Caco-2 (cell line): ENCODE measurements at regions of chr9 and their contacts with region 1.

Region 1: DNA sequence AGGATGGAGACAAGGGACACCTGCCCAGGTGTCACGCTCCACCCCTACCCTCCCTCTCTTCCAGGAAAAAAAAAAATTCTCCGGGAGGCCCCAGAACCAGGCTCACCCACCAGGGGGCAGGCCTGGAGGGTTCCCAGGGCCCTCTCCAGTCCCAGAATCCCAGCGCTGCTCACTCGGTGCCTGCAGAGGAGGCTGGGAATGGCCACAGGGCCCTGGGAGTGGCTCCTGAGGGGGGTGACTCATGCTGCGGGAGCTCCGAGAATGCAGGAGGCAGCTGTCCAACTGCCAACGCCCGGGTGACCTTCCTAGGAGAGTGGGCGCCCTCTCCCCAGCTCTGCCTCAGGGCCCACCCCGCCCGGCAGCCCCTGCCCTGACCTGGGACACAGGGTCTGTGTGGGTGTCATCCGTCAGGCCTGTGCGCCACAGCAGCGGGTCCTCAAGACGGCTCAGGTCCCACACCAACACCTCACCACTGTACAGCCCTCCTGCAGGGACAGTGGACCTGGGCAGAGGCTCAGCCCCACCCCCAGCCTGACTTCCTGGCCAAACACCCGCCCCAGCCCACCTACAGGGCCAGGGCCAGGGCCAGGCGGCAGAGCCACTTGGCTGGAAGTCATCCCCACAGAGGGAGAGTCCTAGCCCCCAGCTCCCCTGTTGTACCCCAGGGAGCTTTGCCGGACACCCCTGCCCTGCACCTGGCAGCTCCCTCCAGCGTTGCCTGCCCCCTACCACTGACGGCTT is 21.2 kb downstream of the DYNC2I2 start:
- DNase-seq: peak; percentile 98 to 99
- H3K4me3 ChIP-seq: peak overlapping the region; percentile 43
- H3K4me3 Mint-ChIP-seq: peak overlapping the region; percentile 76
- H3K27ac Mint-ChIP-seq: peak overlapping the region; percentile 95
- H3K4me1 ChIP-seq: peaks cover 26% of the 10 kb centered on the region
- H3K4me1 Mint-ChIP-seq: peaks cover 5% of the 10 kb centered on the region
- H3K27me3 ChIP-seq: no peaks in the 10 kb centered on the region
- H3K27me3 Mint-ChIP-seq: no peaks in the 10 kb centered on the region
- CTCF ChIP-seq: peak; percentile 91 to 92

Region 2: GRCh38 chr9:128495799-128496417 is 139.5 kb before region 1 on chr9:
- CTCF ChIA-PET with region 1: interaction called, 12 read pairs
- POLR2A ChIA-PET with region 1: interaction called, 4 read pairs
- intact Hi-C with region 1: loop called (anchors 5 kb)
- DNase-seq: peak; percentile 69 to 70
- H3K4me3 ChIP-seq: no peak overlapping the region
- H3K4me3 Mint-ChIP-seq: no peak overlapping the region
- H3K27ac Mint-ChIP-seq: no peak overlapping the region
- H3K4me1 ChIP-seq: no peaks in the 10 kb centered on the region
- H3K4me1 Mint-ChIP-seq: no peaks in the 10 kb centered on the region
- H3K27me3 ChIP-seq: no peaks in the 10 kb centered on the region
- H3K27me3 Mint-ChIP-seq: no peaks in the 10 kb centered on the region
- CTCF ChIP-seq: peak; percentile 28 to 53

Region 3: GRCh38 chr9:128683340-128684278 is 48.2 kb after region 1 on chr9:
- CTCF ChIA-PET with region 1: interaction called, 16 read pairs
- POLR2A ChIA-PET with region 1: interaction called, 27 read pairs
- intact Hi-C with region 1: loop called (anchors 1 kb)
- DNase-seq: peak; percentile 87 to 89
- H3K4me3 ChIP-seq: peak overlapping the region; percentile 83
- H3K4me3 Mint-ChIP-seq: peak overlapping the region; percentile 100
- H3K27ac Mint-ChIP-seq: peak overlapping the region; percentile 99
- H3K4me1 ChIP-seq: peaks cover 24% of the 10 kb centered on the region
- H3K4me1 Mint-ChIP-seq: peaks cover 24% of the 10 kb centered on the region
- H3K27me3 ChIP-seq: no peaks in the 10 kb centered on the region
- H3K27me3 Mint-ChIP-seq: no peaks in the 10 kb centered on the region
- CTCF ChIP-seq: no peak

Region 4: DNA sequence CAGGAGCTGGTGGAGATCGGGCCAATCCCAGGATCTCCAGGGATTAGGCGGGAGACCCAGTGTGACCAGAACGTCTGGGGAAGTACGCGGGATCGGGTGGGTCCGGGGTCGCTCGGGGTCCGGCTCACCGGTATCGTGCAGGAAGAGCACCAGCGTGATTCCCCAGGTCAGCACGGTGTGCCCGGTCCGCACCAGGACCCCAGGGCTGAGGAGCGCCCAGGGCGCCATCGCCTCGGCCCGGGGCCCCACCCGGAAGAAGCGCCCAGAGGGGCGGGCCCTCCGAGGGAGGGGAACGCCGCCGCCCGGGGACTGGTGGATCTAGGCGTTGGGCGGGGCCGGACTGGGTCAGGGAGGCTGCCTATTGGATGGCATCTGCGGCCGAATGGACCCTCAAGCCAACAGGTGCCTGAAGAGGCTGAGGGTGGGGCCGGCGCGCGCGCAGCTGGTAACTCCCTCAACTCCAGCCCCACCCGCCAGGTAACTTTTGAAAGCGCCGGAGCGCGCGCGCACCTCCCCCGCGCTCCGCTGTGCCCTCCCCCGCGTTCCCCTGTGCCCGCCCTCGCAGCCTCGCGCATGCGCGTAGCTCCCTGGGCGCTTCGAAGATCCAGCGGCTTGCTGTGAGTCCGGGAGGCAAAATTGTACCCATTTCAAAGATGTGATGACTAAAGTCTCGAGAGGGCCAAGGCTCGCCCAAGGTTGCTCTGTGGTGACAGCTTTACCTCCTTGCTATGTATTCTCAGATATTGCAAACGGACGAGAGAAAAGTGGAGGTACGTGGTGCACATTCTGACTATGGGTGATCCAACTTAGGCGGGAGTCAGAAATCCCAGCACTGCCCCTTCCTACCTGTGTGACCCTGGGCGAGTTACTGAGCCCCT is 88.7 kb after region 1 on chr9 and contains the start of gene ZDHHC12:
- CTCF ChIA-PET with region 1: interaction called, 12 read pairs
- POLR2A ChIA-PET with region 1: interaction called, 7 read pairs
- intact Hi-C with region 1: no loop called
- DNase-seq: peak; percentile 99 to 100
- H3K4me3 ChIP-seq: peak within 1 kb of the TSS; percentile 81
- H3K4me3 Mint-ChIP-seq: peak within 1 kb of the TSS; percentile 95
- H3K27ac Mint-ChIP-seq: peak within 1 kb of the TSS; percentile 75
- H3K4me1 ChIP-seq: no peaks in the 10 kb centered on the region
- H3K4me1 Mint-ChIP-seq: peaks cover 15% of the 10 kb centered on the region
- H3K27me3 ChIP-seq: no peaks in the 10 kb centered on the region
- H3K27me3 Mint-ChIP-seq: no peaks in the 10 kb centered on the region
- CTCF ChIP-seq: no peak
- total RNA-seq, gene ZDHHC12: 71.0 and 73.7 TPM in 2 replicates